T-cell (primary cell): ENCODE measurements at regions of chr5 and their contacts with region 1.

Region 1: GRCh38 chr5:172274921-172275753 is 8.4 kb downstream of the UBTD2 start:
- DNase-seq: peak in 31 of 35 experiments; percentile 7 to 69 (median 32)
- ATAC-seq: peak in 3 of 4 experiments; percentile 58 to 90 (median 61)
- H3K4me3 ChIP-seq: no peak overlapping the region
- H3K4me3 Mint-ChIP-seq: no peak overlapping the region
- H3K27ac ChIP-seq: no peak overlapping the region
- H3K27ac Mint-ChIP-seq: no peak overlapping the region
- H3K4me1 ChIP-seq: peaks cover 0 to 4% of the 10 kb centered on the region in 2 experiments
- H3K4me1 Mint-ChIP-seq: peaks cover 32 to 36% (median 33%) of the 10 kb centered on the region in 3 donors
- H3K27me3 ChIP-seq: no peaks in the 10 kb centered on the region
- H3K27me3 Mint-ChIP-seq: no peaks in the 10 kb centered on the region

Region 2: DNA sequence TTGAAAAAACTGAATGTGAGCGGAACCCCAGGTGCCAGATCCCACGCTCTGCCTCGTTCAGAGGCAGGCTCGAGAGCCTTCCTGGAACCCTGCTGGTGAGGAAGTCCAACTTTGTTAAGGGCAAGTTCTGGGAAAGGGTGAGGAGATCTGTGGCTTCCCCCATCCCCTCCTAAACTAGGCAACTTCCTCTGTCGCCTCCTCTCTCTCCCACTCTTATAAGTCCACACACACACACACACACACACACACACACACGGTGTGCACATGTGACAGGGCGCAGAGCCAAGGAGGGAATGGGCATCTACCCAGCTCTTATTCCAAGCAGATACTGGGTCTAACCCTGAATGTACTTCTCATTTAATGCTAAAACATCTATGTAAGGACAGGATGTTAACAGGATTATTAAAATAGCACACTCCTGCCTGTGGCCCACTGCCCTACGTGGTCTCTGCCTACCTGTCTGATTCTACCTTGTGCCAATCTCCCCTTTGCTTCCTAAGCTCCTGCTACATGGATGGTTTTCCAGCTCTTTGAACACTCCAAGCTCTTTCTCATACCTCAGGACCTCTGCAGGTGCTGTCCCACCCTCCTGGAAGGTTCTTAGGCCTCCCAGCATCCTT is 196.3 kb before region 1 on chr5:
- CTCF ChIA-PET with region 1: interaction called, 3 to 5 read pairs
- POLR2A ChIA-PET with region 1: interaction called in 1 of 2 experiments, 10 read pairs
- DNase-seq: no peak
- ATAC-seq: peak; percentile 23 to 36 (median 32)
- H3K4me3 ChIP-seq: no peak overlapping the region
- H3K4me3 Mint-ChIP-seq: peak overlapping the region in 1 of 3 donors; percentile 1
- H3K27ac ChIP-seq: peak overlapping the region; percentile 19
- H3K27ac Mint-ChIP-seq: peak overlapping the region; percentile 96
- H3K4me1 ChIP-seq: peaks cover 4 to 10% of the 10 kb centered on the region in 2 experiments
- H3K4me1 Mint-ChIP-seq: peaks cover 20 to 34% (median 29%) of the 10 kb centered on the region in 3 donors
- H3K27me3 ChIP-seq: no peaks in the 10 kb centered on the region
- H3K27me3 Mint-ChIP-seq: no peaks in the 10 kb centered on the region

Region 3: DNA sequence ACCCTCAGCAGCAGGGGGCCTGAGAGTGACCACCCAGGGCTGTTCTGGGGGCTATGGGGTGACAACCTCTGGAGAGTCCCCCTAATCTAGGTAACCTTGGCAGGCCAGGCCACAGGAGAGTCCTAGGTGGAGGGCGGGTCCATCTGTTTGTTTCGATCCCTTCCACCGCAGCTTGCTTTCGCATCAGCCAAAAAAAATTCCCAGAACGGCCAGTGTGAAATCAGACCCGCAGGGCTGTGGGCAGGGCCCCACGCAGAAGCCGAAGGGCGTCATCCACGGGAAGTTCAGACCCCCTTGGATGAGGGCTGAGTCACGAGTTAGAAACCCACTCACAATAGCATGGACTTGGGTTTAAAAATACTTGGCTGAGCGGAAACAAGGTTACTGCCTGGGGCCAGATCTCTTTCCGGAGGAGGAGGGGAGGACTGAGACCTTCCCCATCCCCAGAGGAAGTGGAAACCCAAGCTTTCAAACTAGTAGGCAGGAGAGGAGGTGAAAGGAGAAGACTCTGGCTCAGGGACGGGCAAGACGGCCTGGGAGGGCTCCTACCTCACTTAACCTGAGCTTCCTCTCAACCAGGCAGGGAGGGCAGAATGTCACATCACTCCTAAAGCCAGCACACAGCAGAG is 95.7 kb before region 1 on chr5:
- CTCF ChIA-PET with region 1: interaction called in 1 of 2 experiments, 3 read pairs
- POLR2A ChIA-PET with region 1: interaction called in 1 of 2 experiments, 14 read pairs
- DNase-seq: peak in 25 of 35 experiments; percentile 8 to 71 (median 28)
- ATAC-seq: peak; percentile 1 to 20 (median 10)
- H3K4me3 ChIP-seq: peak overlapping the region; percentile 54 to 67
- H3K4me3 Mint-ChIP-seq: peak overlapping the region; percentile 79 to 95 (median 89)
- H3K27ac ChIP-seq: peak overlapping the region; percentile 95
- H3K27ac Mint-ChIP-seq: peak overlapping the region; percentile 100
- H3K4me1 ChIP-seq: peaks cover 62 to 97% of the 10 kb centered on the region in 2 experiments
- H3K4me1 Mint-ChIP-seq: peaks cover 84 to 98% (median 94%) of the 10 kb centered on the region in 3 donors
- H3K27me3 ChIP-seq: no peaks in the 10 kb centered on the region
- H3K27me3 Mint-ChIP-seq: no peaks in the 10 kb centered on the region

Region 4: DNA sequence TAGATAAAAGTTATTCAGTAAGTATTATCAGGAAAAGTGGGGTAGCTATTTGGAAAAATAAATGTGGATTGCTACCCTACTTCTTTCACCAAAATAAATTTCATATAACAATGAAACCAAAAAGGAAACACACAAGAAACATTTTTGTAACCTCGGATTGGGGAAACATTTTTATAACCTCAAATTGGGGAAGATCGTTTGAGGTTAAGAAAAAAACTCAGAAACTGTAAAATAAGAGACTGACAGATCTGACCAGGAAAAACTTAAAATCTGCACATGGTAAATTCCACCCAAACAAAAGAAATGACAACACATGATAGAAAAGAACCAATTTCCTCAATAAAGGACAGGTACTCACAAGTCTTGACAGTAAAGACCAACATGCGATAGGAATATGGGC is 67.6 kb before region 1 on chr5:
- CTCF ChIA-PET with region 1: no interaction called
- POLR2A ChIA-PET with region 1: interaction called in 1 of 2 experiments, 15 read pairs
- DNase-seq: no peak
- ATAC-seq: no peak
- H3K4me3 ChIP-seq: no peak overlapping the region
- H3K4me3 Mint-ChIP-seq: no peak overlapping the region
- H3K27ac ChIP-seq: no peak overlapping the region
- H3K27ac Mint-ChIP-seq: no peak overlapping the region
- H3K4me1 ChIP-seq: no peaks in the 10 kb centered on the region
- H3K4me1 Mint-ChIP-seq: peaks cover 5 to 13% (median 7%) of the 10 kb centered on the region in 3 donors
- H3K27me3 ChIP-seq: no peaks in the 10 kb centered on the region
- H3K27me3 Mint-ChIP-seq: no peaks in the 10 kb centered on the region